ENCODE measurements at regions of chr7 and their contacts with region 1.

Region 1: DNA sequence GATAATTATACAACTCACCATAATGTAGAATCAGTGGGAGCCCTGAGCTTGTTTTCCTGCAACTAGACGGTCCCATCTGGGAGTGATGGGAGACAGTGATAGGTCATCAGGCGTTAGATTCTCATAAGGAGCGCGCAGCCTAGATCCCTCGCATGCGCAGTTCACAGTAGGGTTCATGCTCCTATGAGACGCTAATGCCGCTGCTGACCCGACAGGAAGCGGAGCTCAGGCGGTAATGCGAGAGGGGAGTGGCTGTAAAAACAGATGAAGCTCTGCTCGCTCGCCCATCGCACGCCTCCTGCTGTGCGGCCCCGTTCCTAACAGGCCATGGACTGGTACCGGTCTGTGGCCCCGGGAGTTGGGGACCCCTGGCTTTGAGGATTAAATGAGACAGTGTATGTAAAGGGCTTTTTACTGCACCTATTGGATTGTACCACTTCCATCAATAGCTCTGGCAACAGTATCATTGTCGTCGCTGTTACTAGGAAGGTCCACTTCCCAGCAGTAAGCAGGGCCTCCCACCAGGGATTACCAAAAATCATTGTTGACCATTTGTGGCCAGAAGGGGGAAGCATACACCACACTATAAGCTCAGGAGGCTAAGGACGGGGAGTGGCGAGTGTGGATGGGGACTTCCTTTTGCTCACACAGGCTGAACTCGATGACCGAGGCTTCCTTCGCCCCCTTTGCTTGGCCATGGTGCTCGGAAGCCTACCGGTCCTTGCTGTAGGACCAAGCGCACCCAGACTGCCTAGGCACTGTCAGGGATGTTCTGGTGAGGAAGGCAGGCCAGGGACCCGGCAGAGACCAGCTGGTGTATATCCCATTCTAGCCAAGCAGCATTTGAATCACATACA is 26.4 kb downstream of the AKR1B1 start:
- DNase-seq: peak; percentile 89 to 91
- H3K4me3 ChIP-seq: peak overlapping the region; percentile 27
- H3K4me1 ChIP-seq: peaks cover 9% of the 10 kb centered on the region
- H3K27me3 ChIP-seq: no peaks in the 10 kb centered on the region

Region 2: GRCh38 chr7:134514663-134515062 is 82.1 kb after region 1 on chr7:
- in situ Hi-C with region 1: loop called (anchors 10 kb)
- DNase-seq: peak; percentile 53 to 63
- H3K4me3 ChIP-seq: no peak overlapping the region
- H3K4me1 ChIP-seq: no peaks in the 10 kb centered on the region
- H3K27me3 ChIP-seq: no peaks in the 10 kb centered on the region; the same call in 1 of the 2 replicates

Region 3: DNA sequence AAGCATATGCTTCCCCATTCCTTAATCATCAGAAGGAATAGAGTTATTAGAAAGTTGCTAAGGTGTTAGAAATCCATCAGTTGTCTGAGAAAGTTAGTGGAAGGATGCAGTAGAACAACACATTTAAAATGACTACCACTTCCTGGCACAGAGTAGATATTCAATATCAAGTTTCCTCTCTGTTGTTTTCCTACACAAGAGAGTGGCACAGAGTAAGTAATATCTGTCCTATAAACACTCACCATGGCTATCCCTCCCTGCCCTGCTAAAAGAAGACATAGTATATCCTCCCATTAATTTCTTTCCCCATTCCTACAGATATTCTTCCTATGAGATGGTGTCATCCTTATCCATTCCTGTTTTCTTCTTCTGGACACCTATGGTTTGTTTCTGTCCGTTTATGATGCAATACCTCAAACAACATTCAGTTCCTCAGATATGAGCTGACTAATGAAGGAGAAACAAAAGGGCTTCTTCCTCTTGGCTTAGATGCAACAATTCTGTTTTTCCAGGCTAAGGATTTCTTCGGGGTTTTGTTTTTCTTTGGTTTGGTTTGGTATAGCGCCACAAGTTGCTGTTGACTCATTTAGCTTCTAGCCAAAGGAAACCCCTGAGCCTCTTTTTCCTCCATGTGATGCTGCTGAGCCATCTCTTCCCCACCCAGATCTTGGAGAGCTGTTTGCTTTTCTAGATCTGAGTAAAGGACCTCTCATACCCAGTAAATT is 181.3 kb after region 1 on chr7:
- in situ Hi-C with region 1: loop called (anchors 5 kb)
- DNase-seq: no peak
- H3K4me3 ChIP-seq: no peak overlapping the region
- H3K4me1 ChIP-seq: no peaks in the 10 kb centered on the region
- H3K27me3 ChIP-seq: peaks cover 12% of the 10 kb centered on the region

Region 4: DNA sequence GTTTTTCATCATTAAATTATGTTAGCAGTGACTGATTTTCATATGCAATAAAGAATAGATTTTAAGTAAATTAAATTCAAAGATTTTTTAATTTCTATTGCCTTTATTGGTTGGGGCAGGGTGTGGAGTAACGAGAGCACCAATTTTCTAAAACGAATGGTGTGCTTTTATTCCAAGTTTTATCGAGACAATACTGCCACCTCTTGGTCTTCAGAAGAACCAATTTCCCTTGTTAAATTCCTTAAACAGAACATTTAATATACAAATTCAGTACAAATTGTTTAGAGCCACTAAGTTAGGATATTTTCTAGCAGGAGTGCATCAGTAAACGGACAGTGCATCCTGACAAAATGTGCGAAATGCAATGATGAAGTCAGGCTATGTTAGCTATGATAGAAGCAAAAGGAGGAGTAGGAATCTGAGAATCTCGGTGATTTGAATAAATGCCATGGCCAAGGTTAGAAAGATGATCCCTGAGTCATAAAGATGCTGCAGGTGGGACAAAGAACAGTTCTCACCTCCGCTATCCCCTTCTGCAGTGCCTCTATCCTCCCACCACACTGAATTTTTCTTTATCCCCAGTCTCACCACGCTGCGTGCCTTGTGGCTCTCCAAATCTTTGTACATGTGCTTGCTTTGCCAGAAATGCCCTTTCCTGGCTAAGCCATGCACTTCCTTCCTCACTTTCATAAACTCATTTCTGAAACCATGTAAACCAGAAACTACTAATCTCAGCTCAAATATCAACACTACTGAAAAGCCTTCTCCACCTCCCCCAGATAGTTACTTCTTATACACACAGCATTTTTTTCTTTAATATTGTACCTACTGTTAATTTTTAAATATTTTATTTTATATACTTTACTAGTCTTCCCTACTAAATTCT is 521.9 kb after region 1 on chr7:
- in situ Hi-C with region 1: loop called (anchors 25 kb)
- DNase-seq: peak in 1 of 2 experiments; percentile 68
- H3K4me3 ChIP-seq: no peak overlapping the region
- H3K4me1 ChIP-seq: no peaks in the 10 kb centered on the region
- H3K27me3 ChIP-seq: no peaks in the 10 kb centered on the region